ENCODE measurements at regions of chr14 and their contacts with region 1.

Region 1: GRCh38 chr14:49986340-49987014 is 93.6 kb downstream of the ARF6 start:
- DNase-seq: no peak
- H3K4me3 ChIP-seq: no peak overlapping the region
- H3K4me3 Mint-ChIP-seq: peak overlapping the region; percentile 47
- H3K27ac Mint-ChIP-seq: peak overlapping the region; percentile 90
- H3K4me1 ChIP-seq: peaks cover 61% of the 10 kb centered on the region
- H3K4me1 Mint-ChIP-seq: peaks cover 46% of the 10 kb centered on the region
- H3K27me3 ChIP-seq: no peaks in the 10 kb centered on the region
- H3K27me3 Mint-ChIP-seq: no peaks in the 10 kb centered on the region
- CTCF ChIP-seq: no peak

Region 2: GRCh38 chr14:49966304-49966809 is 20.1 kb before region 1 on chr14:
- CTCF ChIA-PET with region 1: interaction called, 4 read pairs
- POLR2A ChIA-PET with region 1: interaction called, 4 read pairs
- intact Hi-C with region 1: loop called (anchors 1 kb)
- DNase-seq: peak; percentile 86 to 91
- H3K4me3 ChIP-seq: 0 out of 2 replicates have a peak overlapping the region, but pooled peaks have one; percentile 1
- H3K4me3 Mint-ChIP-seq: peak overlapping the region; percentile 61
- H3K27ac Mint-ChIP-seq: peak overlapping the region; percentile 89
- H3K4me1 ChIP-seq: peaks cover 53% of the 10 kb centered on the region
- H3K4me1 Mint-ChIP-seq: peaks cover 61% of the 10 kb centered on the region
- H3K27me3 ChIP-seq: no peaks in the 10 kb centered on the region
- H3K27me3 Mint-ChIP-seq: no peaks in the 10 kb centered on the region
- CTCF ChIP-seq: no peak